Right lobe of liver (tissue), 6 donors: ENCODE measurements at regions of chr2 and their contacts with region 1.

Region 1: DNA sequence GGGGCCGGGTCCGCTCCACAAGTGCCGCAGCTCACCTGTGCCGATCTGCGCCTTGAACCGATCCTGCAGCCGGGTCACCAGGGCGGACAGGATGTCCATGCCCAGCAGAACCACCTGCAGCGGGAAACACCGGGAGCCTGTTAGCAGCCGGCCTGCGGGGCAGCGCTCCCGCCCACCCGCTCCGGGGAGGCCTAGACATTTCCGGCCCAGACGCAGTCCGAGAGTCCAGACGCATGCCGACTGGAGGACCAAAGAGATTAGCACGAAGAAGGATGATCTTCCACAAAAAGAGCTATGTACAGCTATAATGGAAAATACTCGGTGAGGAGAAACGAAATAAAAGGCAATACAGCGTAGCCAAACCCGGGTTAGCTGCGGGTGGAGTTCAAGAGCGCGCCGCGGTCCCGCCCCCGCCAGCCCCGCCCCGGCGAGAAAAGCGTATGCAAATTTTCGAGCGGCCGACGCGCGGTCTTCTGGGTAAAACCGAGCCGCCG is 421 bp upstream of the RNU4ATAC start:
- DNase-seq: peak; percentile 86 to 89 (median 88)
- ATAC-seq: peak; percentile 79 to 86 (median 84)
- H3K4me3 ChIP-seq: peak overlapping the region; percentile 73 to 80 (median 77)
- H3K27ac ChIP-seq: peak overlapping the region; percentile 89 to 92 (median 91)
- H3K4me1 ChIP-seq: peaks cover 0 to 50% (median 9%) of the 10 kb centered on the region in 4 donors
- H3K27me3 ChIP-seq: no peaks in the 10 kb centered on the region
- CTCF ChIP-seq: no peak
- POLR2A ChIP-seq: no peak

Region 2: DNA sequence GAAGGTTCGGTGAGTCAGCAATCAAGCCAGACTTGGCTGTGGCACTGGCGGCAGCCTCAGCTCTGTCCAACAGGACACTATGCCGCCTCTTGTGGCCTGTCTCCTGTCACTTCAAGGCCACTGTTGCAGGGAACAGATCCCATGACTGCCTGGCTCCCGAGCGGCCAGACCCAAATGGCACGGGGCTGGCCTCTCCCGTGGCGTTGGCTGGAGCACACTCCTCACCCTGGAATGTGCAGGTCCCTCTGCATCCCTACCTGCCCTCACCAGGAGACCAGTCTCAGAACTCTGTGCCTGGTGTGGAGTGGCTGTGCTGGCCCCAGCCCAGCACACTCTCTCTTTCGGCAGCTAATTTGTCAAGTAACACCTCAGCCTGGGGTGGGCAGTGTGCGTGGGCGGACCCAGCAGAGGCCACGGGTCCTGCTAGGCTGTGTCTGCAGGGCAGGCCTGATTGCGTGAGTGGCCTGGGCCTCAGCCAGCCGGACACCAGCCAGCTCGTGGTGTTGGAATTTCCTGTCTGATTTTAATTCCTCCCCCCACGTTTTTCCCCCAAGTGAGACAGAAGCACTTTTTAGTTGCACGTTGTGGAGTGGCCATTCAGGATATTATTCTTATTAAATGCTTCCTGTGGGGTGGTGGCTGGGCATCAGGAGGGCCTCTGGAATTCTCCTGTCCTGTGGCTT is 615.3 kb before region 1 on chr2:
- intact Hi-C with region 1: no loop called
- DNase-seq: peak in 2 of 3 donors; percentile 47 to 59
- ATAC-seq: peak; percentile 62 to 68 (median 65)
- H3K4me3 ChIP-seq: no peak overlapping the region
- H3K27ac ChIP-seq: no peak overlapping the region
- H3K4me1 ChIP-seq: no peaks in the 10 kb centered on the region
- H3K27me3 ChIP-seq: no peaks in the 10 kb centered on the region
- CTCF ChIP-seq: no peak
- POLR2A ChIP-seq: no peak

Region 3: GRCh38 chr2:121710470-121711170 is 180.4 kb after region 1 on chr2:
- intact Hi-C with region 1: loop called in 1 of 2 experiments (anchors 10 kb)
- DNase-seq: peak in 1 of 3 donors; percentile 11
- ATAC-seq: no peak
- H3K4me3 ChIP-seq: no peak overlapping the region
- H3K27ac ChIP-seq: no peak overlapping the region
- H3K4me1 ChIP-seq: peaks cover 0 to under 1% (median 0%) of the 10 kb centered on the region in 4 donors
- H3K27me3 ChIP-seq: no peaks in the 10 kb centered on the region
- CTCF ChIP-seq: no peak
- POLR2A ChIP-seq: no peak